Mammary epithelial cell (primary cell): ENCODE measurements at regions of chr6 and their contacts with region 1.

Region 1: GRCh38 chr6:35275744-35276260 is 16.3 kb downstream of the ZNF76 start:
- DNase-seq: no peak
- H3K4me3 ChIP-seq: no peak overlapping the region
- H3K27ac ChIP-seq: no peak overlapping the region
- H3K4me1 ChIP-seq: peaks cover 10% of the 10 kb centered on the region
- H3K27me3 ChIP-seq: no peaks in the 10 kb centered on the region
- CTCF ChIP-seq: no peak

Region 2: GRCh38 chr6:34447910-34448309 is 827.9 kb before region 1 on chr6:
- CTCF ChIA-PET with region 1: no interaction called
- dilution Hi-C with region 1: no loop called
- in situ Hi-C with region 1: no loop called
- intact Hi-C with region 1: no loop called
- DNase-seq: no peak
- H3K4me3 ChIP-seq: no peak overlapping the region
- H3K27ac ChIP-seq: no peak overlapping the region
- H3K4me1 ChIP-seq: no peaks in the 10 kb centered on the region
- H3K27me3 ChIP-seq: no peaks in the 10 kb centered on the region
- CTCF ChIP-seq: no peak

Region 3: DNA sequence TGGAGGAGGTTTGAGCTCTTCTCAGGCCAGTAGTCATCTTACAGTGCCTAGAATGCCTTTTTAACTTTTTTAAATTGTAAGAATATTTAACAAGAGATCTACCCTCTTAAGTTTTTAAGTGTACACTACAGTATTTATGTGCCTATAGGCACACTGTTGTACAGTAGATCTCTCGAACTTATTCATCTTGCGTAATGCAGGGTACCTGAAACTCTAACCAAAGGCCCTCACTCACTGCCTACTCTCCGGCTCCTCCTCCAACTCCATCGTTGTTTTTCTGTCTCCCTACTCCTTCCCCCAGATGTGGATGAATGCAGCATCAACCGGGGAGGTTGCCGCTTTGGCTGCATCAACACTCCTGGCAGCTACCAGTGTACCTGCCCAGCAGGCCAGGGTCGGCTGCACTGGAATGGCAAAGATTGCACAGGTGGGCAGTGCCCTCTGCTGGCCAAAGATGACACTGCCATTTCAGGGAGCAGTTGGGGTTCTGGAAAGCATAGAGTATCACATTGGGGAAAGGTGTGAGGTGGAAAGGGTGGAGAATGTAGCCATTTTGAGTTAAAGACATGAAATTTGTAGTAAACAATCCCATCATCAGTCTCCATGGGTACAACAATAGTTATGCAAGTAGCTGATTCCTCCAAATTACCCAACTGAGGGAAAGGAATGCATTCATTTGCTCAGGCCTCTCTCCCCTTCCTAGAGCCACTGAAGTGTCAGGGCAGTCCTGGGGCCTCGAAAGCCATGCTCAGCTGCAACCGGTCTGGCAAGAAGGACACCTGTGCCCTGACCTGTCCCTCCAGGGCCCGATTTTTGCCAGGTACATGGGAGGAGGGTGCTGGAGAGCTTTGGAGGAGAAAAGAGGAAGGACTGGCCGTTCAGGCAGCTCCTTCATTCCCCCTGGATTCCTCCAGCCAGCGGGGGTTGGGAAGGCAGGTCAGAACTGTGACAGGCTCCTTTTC is 34.7 kb before region 1 on chr6:
- CTCF ChIA-PET with region 1: no interaction called
- dilution Hi-C with region 1: no loop called
- in situ Hi-C with region 1: no loop called
- intact Hi-C with region 1: no loop called
- DNase-seq: peak; percentile 62
- H3K4me3 ChIP-seq: no peak overlapping the region
- H3K27ac ChIP-seq: no peak overlapping the region
- H3K4me1 ChIP-seq: no peaks in the 10 kb centered on the region
- H3K27me3 ChIP-seq: no peaks in the 10 kb centered on the region
- CTCF ChIP-seq: peak; percentile 96 to 98

Region 4: GRCh38 chr6:35311390-35312075 is 35.7 kb after region 1 on chr6:
- CTCF ChIA-PET with region 1: no interaction called
- dilution Hi-C with region 1: no loop called
- in situ Hi-C with region 1: no loop called
- intact Hi-C with region 1: no loop called
- DNase-seq: no peak
- H3K4me3 ChIP-seq: no peak overlapping the region
- H3K27ac ChIP-seq: no peak overlapping the region
- H3K4me1 ChIP-seq: no peaks in the 10 kb centered on the region
- H3K27me3 ChIP-seq: no peaks in the 10 kb centered on the region
- CTCF ChIP-seq: no peak

Region 5: GRCh38 chr6:35327349-35328027 is 51.7 kb after region 1 on chr6:
- CTCF ChIA-PET with region 1: no interaction called
- dilution Hi-C with region 1: loop called (anchors 5 kb)
- in situ Hi-C with region 1: no loop called
- intact Hi-C with region 1: no loop called
- DNase-seq: peak; percentile 36
- H3K4me3 ChIP-seq: no peak overlapping the region
- H3K27ac ChIP-seq: no peak overlapping the region
- H3K4me1 ChIP-seq: no peaks in the 10 kb centered on the region
- H3K27me3 ChIP-seq: no peaks in the 10 kb centered on the region
- CTCF ChIP-seq: peak; percentile 47 to 74

Region 6: GRCh38 chr6:35368038-35368887 is 92.5 kb after region 1 on chr6:
- CTCF ChIA-PET with region 1: no interaction called
- dilution Hi-C with region 1: loop called (anchors 5 kb)
- in situ Hi-C with region 1: no loop called
- intact Hi-C with region 1: no loop called
- DNase-seq: peak; percentile 46
- H3K4me3 ChIP-seq: no peak overlapping the region
- H3K27ac ChIP-seq: no peak overlapping the region
- H3K4me1 ChIP-seq: peaks cover 33% of the 10 kb centered on the region
- H3K27me3 ChIP-seq: no peaks in the 10 kb centered on the region
- CTCF ChIP-seq: no peak

Region 7: GRCh38 chr6:35443341-35444030 is 167.7 kb after region 1 on chr6:
- CTCF ChIA-PET with region 1: no interaction called
- dilution Hi-C with region 1: loop called (anchors 5 kb)
- in situ Hi-C with region 1: no loop called
- intact Hi-C with region 1: no loop called
- DNase-seq: no peak
- H3K4me3 ChIP-seq: no peak overlapping the region
- H3K27ac ChIP-seq: no peak overlapping the region
- H3K4me1 ChIP-seq: peaks cover 9% of the 10 kb centered on the region
- H3K27me3 ChIP-seq: no peaks in the 10 kb centered on the region
- CTCF ChIP-seq: no peak